GM23248 (cell line): ENCODE measurements at regions of chr22 and their contacts with region 1.

Region 1: DNA sequence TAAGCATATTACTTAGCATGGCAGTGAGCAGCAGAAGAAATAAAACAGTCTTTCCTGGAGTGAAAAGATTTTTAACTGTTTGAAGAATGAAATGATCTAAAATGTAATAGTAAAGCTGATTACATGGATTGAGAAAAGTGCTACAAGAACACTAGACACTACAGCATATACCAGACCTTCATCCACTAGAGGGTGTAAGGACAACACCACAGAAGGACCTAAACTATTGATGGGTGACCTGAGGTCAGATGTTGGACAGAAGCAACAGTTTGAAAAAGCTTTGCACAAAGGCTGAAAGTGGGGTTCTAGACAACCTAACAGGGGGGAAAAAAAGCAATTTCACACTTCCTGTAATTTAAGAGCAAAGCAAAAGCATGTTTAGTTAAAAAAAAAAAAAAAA is 97.7 kb downstream of the RBFOX2 start:
- DNase-seq: peak; percentile 78
- H3K4me3 ChIP-seq: no peak overlapping the region
- H3K27ac ChIP-seq: no peak overlapping the region
- H3K4me1 ChIP-seq: peaks cover 7% of the 10 kb centered on the region; the same call in 1 of the 2 replicates
- H3K27me3 ChIP-seq: no peaks in the 10 kb centered on the region

Region 2: DNA sequence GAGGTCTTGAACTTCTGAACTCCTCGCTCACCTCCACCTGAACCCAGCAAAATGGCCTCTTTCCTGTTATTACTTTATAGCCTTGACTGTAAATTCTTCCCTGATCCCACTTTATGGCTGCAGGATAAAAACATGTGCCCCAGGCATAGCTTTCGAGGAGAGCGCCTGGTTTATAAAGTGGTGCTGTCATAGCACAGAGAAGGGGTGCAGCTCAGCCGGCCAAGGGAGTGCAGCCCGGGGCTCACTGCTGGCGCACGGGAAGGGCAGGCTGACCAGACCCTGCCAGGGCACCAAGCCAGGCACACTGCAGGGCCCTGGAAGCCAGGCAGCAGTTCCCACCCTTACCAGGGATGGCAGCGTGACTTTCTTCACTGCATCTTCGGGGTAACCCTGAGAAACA is 814.1 kb before region 1 on chr22:
- in situ Hi-C with region 1: no loop called
- DNase-seq: no peak
- H3K4me3 ChIP-seq: no peak overlapping the region
- H3K27ac ChIP-seq: no peak overlapping the region
- H3K4me1 ChIP-seq: no peaks in the 10 kb centered on the region
- H3K27me3 ChIP-seq: no peaks in the 10 kb centered on the region

Region 3: GRCh38 chr22:36065775-36066559 is 135.0 kb after region 1 on chr22:
- in situ Hi-C with region 1: loop called (anchors 10 kb)
- DNase-seq: peak; percentile 99
- H3K4me3 ChIP-seq: peak overlapping the region; percentile 85
- H3K27ac ChIP-seq: peak overlapping the region; percentile 88
- H3K4me1 ChIP-seq: 0 out of 2 replicates have a peak, but pooled peaks cover 7% of the 10 kb centered on the region
- H3K27me3 ChIP-seq: no peaks in the 10 kb centered on the region